Activated B cell treated with CpG ODN at 0.5 μM for 24 hours (primary cell): ENCODE measurements at regions of chr16 and their contacts with region 1.

Region 1: GRCh38 chr16:67979955-67980678 is at the start of gene DPEP3:
- DNase-seq: no peak
- ATAC-seq: no peak
- H3K4me3 Mint-ChIP-seq: no peak within 1 kb of the TSS
- H3K27ac Mint-ChIP-seq: no peak within 1 kb of the TSS
- H3K4me1 Mint-ChIP-seq: peaks cover 33% of the 10 kb centered on the region
- H3K27me3 Mint-ChIP-seq: no peaks in the 10 kb centered on the region
- CTCF ChIP-seq: no peak
- total RNA-seq, gene DPEP3: 0.29 and 0.38 TPM in 2 replicates

Region 2: GRCh38 chr16:67968400-67969253 is 11.5 kb before region 1 on chr16 and contains the start of gene SLC12A4:
- CTCF ChIA-PET with region 1: no interaction called
- POLR2A ChIA-PET with region 1: interaction called, 19 read pairs
- intact Hi-C with region 1: loop called (anchors 1 kb)
- DNase-seq: peak; percentile 87
- ATAC-seq: peak; percentile 93
- H3K4me3 Mint-ChIP-seq: peak within 1 kb of the TSS; percentile 96
- H3K27ac Mint-ChIP-seq: peak within 1 kb of the TSS; percentile 80
- H3K4me1 Mint-ChIP-seq: peaks cover 28% of the 10 kb centered on the region
- H3K27me3 Mint-ChIP-seq: no peaks in the 10 kb centered on the region
- CTCF ChIP-seq: no peak
- total RNA-seq, gene SLC12A4: 24.6 and 37.9 TPM in 2 replicates

Region 3: DNA sequence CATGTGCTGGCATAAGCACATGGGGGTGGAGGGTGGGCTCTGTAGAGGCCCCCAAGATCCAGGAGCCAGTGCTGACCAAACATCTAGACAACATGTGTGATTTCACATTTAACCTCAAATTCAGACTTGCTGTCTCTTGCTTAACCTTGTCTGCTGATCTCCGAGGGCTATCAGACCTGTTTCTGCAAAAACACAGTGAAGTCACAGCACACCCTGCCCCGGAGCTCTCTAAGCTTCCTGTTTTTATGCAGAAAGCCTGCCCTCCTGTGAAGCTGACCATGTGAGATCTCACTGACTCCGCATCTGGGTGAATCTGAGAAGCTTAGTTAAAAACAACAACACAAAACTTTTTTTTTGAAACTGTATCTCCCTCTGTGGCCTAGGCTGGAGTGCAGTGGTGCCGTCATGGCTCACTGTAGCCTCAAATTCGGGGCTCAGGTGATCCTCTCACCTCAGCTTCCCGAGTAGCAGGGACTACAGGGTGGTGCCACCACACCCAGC is 25.7 kb after region 1 on chr16:
- CTCF ChIA-PET with region 1: interaction called, 5 read pairs
- POLR2A ChIA-PET with region 1: interaction called, 14 read pairs
- intact Hi-C with region 1: no loop called
- DNase-seq: no peak
- ATAC-seq: peak; percentile 98
- H3K4me3 Mint-ChIP-seq: peak overlapping the region; percentile 58
- H3K27ac Mint-ChIP-seq: peak overlapping the region; percentile 95
- H3K4me1 Mint-ChIP-seq: peaks cover 40% of the 10 kb centered on the region
- H3K27me3 Mint-ChIP-seq: no peaks in the 10 kb centered on the region
- CTCF ChIP-seq: no peak